ENCODE measurements at regions of chr16 and their contacts with region 1.

Region 1: DNA sequence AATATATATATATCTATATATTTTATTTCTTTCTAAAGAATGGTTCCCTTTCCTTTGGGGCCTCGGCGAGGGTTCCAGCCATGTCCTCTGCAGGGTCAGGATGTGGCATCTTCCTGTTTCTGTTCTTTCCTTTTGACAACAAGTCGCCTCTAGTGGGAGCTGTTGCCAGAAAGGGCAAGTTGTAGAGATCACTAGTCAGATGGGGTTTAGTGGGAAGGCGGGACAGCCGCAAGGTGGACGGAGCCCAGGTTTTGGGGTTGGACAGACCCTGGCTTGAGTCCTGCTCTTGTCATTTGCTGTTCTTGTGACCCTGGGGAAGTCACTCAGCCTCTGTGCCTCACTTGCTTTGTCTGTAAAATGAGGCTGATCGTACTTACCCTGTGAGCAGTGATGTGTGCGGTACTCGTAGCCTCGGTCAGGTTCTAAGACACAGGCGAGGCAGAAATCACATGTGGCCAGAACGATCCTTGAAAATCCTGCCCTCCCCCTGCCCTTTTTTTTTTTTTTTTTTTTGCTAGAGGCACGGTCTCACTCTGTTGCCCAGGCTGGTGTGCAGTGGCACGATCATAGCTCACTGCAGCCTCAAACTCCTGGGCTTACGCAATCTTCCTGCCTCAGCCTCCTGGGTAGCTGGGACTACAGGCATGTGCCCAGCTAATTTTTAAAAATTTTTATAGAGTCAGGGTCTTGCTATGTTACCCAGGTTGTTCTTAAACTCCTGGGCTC is 80.1 kb downstream of the ABCC6 start:
- DNase-seq: no peak
- H3K4me3 ChIP-seq: no peak overlapping the region
- H3K27ac ChIP-seq: peak overlapping the region; percentile 48
- H3K4me1 ChIP-seq: peaks cover 16% of the 10 kb centered on the region
- H3K27me3 ChIP-seq: no peaks in the 10 kb centered on the region
- CTCF ChIP-seq: peak; percentile 41 to 52

Region 2: DNA sequence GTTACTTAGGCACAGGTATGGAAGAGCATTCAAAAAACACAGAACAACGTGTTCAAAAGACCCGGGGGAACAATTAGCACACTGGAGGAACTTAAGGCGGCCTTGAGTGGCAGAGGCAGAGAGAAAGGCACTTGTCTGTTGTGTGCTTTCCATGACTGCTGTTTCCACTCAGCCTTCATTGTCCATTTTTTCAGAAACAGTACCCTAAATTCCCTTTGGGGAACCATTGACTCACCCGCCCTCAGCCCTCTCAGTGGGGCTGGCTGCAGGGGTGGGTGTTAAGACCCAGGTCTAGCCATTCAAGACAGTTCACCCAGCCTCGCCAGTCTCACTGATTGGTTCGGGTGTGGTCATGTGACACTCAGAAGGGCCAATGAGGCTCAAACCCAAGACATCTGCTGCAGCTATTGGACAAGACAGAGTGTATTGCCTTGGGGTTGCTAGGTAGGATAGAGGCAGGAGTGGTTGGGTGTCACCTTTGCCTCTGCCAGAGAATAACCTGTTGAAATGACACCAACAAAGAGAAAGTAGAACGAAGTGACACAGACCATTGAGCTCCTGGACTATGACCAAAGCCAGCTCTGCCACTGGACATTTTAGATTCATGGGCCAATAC is 235.2 kb before region 1 on chr16:
- CTCF ChIA-PET with region 1: no interaction called
- dilution Hi-C with region 1: no loop called
- in situ Hi-C with region 1: no loop called
- intact Hi-C with region 1: no loop called
- DNase-seq: peak; percentile 48
- H3K4me3 ChIP-seq: no peak overlapping the region
- H3K27ac ChIP-seq: no peak overlapping the region
- H3K4me1 ChIP-seq: no peaks in the 10 kb centered on the region
- H3K27me3 ChIP-seq: no peaks in the 10 kb centered on the region
- CTCF ChIP-seq: no peak

Region 3: DNA sequence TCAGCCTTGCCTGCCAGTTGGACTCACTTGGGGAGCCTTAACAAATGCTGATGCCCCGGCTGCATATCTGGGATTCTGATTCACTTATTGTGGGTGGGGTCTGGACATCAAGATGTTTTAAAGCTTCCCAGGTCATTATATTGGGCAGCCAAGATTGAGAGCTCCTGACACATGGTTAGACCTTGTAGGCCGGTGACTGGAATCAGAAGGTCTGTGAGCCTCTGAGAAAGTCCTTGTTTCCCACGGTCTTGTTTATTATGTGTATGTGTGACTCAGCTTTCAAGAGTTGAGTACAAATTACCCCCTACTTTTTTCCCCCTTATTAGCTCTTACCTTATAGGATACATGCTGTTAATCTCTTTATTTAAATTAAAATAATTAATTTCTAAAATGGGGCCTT is 90.3 kb before region 1 on chr16:
- CTCF ChIA-PET with region 1: no interaction called
- dilution Hi-C with region 1: loop called (anchors 5 kb)
- in situ Hi-C with region 1: no loop called
- intact Hi-C with region 1: no loop called
- DNase-seq: no peak
- H3K4me3 ChIP-seq: no peak overlapping the region
- H3K27ac ChIP-seq: no peak overlapping the region
- H3K4me1 ChIP-seq: no peaks in the 10 kb centered on the region
- H3K27me3 ChIP-seq: no peaks in the 10 kb centered on the region
- CTCF ChIP-seq: no peak

Region 4: DNA sequence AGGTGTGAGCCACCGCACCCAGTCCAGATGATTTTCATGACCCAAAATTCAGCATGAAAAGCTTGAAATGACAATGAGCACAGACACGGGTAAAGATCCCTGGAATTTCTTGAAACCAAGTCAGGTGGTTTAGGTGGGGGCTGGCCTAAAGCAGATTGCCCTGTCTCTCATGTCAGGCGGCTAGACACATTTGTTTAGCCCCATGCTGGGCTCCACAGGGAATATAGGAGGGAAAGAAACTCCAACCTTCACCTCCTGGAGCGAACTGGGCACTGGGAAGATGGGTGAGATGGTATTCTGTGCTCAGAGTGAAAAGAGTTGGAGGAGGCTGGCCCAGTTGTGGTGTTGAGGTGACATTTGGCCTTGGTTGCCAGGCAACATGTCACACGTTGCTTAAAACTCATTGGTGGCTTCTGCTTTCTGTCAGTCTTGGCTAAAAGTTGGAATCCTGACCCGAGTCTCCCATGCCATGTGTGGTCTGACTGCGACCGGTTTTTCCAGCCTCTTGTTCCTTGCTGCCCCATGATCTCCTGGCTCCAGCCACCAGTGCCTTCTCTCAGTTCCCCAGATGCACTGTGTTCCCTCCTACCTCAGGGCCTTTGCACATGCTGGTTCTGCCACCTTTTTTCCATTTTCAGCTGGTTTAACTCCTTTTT is 33.6 kb before region 1 on chr16:
- CTCF ChIA-PET with region 1: no interaction called
- dilution Hi-C with region 1: loop called (anchors 5 kb)
- in situ Hi-C with region 1: no loop called
- intact Hi-C with region 1: no loop called
- DNase-seq: no peak
- H3K4me3 ChIP-seq: no peak overlapping the region
- H3K27ac ChIP-seq: no peak overlapping the region
- H3K4me1 ChIP-seq: no peaks in the 10 kb centered on the region
- H3K27me3 ChIP-seq: no peaks in the 10 kb centered on the region
- CTCF ChIP-seq: no peak

Region 5: DNA sequence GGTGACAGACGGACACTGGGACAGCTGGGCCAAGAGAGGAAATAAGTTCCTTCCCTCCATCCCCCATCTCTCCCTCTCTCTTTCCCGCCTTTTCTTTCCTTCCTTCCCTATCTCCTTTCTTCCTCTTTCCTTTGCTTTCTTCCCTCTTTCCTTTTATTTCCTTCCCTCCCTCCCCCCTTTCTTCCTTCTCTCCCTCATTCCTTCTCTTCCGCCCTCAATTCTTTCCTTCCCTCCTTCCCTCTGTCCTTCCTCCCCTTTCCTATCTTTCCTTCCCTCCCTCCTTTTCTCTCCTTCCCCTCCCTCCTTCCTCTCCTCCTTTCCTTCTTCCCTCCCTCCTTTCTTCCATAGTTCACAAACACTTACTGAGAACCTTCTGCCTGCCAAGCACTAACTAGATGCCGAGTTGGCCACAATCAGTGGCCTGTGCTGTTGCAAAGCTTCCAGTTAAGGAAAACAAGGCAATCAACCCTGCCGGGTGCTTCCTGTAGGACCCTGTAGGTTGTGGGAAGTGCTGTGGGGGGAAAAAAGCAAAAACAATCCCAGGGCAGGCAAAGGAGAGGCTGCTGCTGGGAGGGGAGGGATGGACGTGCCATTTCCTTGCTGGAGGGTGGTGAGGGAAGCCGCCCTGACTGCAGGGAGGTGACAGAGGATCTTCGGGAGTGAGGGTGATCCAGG is 48.4 kb after region 1 on chr16:
- CTCF ChIA-PET with region 1: no interaction called
- dilution Hi-C with region 1: loop called (anchors 5 kb)
- in situ Hi-C with region 1: no loop called
- intact Hi-C with region 1: no loop called
- DNase-seq: no peak
- H3K4me3 ChIP-seq: no peak overlapping the region
- H3K27ac ChIP-seq: no peak overlapping the region
- H3K4me1 ChIP-seq: no peaks in the 10 kb centered on the region
- H3K27me3 ChIP-seq: no peaks in the 10 kb centered on the region
- CTCF ChIP-seq: no peak

Measured in mammary epithelial cell (primary cell).